IMR-90 (cell line): ENCODE measurements at regions of chr19 and their contacts with region 1.

Region 1: DNA sequence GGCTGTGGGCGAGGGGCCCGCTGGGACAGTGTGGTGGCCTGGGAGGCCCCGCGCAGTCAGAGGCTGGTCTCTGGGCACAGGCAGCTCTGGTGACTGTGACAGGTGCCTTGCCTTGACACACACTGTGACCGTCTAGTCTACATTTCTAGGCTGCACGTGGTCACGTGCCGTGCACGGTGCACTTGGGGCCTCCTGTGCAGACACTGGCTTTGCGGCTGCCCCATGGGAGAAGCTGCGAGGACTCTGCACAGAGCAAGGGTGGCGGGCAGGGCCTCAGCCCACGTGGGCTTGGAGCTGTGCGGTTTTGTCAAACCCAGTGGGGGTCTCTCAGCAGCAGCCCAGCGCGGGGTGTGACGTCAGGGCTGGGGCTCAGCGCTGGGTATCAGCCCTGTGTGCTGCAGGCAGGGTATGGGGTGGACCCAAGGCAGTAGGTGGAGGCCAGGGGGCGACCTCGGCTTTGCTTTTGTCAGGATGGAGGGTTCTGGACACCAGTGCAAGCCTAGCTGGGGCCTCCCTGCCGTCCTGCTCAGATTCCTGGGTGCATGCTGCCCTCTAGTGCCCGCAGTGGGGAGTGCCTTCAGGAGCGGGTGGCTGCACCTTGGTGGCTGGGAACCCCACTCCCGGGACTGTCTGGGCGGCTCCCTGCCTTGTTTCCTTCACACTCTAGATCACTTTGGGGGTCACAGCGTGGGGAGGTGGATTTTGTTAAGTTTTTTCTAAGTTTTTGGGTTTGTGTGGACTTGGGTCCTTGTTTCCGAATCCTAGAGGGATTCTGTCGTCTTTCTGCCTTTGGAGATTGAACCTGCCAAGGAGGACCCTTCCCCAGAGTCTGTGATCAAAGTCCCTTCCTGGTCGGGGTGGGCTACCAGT is 62.6 kb downstream of the KDM4B start:
- DNase-seq: peak; percentile 65
- ATAC-seq: peak; percentile 96
- H3K4me3 ChIP-seq: no peak overlapping the region
- H3K27ac ChIP-seq: no peak overlapping the region
- H3K4me1 ChIP-seq: peaks cover 12% of the 10 kb centered on the region
- H3K27me3 ChIP-seq: no peaks in the 10 kb centered on the region
- CTCF ChIP-seq: peak; percentile 95
- POLR2A ChIP-seq: 0 out of 2 replicates have a peak, but pooled peaks have one; percentile 41
- RAD21 ChIP-seq: peak; percentile 96

Region 2: DNA sequence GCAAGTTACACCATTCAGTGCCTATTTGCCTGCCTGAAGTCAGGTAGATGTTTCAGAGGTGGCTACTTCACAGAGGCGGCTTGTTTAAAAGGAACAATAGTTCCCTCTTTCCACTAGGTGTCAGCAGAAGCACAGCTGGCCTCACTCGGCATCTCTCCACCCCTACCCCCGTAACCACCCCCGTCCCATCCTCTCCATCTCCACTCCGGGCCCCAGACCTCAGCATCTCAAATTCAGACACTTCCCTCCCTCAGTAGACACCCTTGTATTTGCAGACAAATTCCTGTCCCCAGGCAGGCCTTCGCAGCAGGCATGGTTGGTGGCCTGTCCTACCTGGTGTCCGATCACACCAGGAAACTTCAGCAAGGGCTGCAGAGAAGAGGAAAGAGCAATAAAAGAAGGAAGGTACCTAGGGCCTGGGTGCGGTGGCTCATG is 298.8 kb before region 1 on chr19:
- CTCF ChIA-PET with region 1: no interaction called
- POLR2A ChIA-PET with region 1: no interaction called
- dilution Hi-C with region 1: no loop called
- in situ Hi-C with region 1: no loop called
- intact Hi-C with region 1: loop called (anchors 10 kb)
- DNase-seq: peak; percentile 57
- ATAC-seq: peak; percentile 98
- H3K4me3 ChIP-seq: no peak overlapping the region
- H3K27ac ChIP-seq: no peak overlapping the region
- H3K4me1 ChIP-seq: peaks cover 2% of the 10 kb centered on the region; the same call in 1 of the 2 replicates
- H3K27me3 ChIP-seq: peaks cover 11% of the 10 kb centered on the region
- CTCF ChIP-seq: peak; percentile 95
- POLR2A ChIP-seq: 0 out of 2 replicates have a peak, but pooled peaks have one; percentile 34
- RAD21 ChIP-seq: peak; percentile 93

Region 3: GRCh38 chr19:4811328-4812131 is 219.9 kb before region 1 on chr19:
- CTCF ChIA-PET with region 1: interaction called, 8 read pairs
- POLR2A ChIA-PET with region 1: no interaction called
- dilution Hi-C with region 1: no loop called
- in situ Hi-C with region 1: loop called (anchors 5 kb)
- intact Hi-C with region 1: loop called (anchors 1 kb)
- DNase-seq: peak; percentile 45
- ATAC-seq: peak; percentile 33
- H3K4me3 ChIP-seq: no peak overlapping the region
- H3K27ac ChIP-seq: peak overlapping the region; percentile 11
- H3K4me1 ChIP-seq: peaks cover 2% of the 10 kb centered on the region; the same call in 1 of the 2 replicates
- H3K27me3 ChIP-seq: no peaks in the 10 kb centered on the region
- CTCF ChIP-seq: peak; percentile 71
- POLR2A ChIP-seq: no peak
- RAD21 ChIP-seq: peak; percentile 53

Region 4: DNA sequence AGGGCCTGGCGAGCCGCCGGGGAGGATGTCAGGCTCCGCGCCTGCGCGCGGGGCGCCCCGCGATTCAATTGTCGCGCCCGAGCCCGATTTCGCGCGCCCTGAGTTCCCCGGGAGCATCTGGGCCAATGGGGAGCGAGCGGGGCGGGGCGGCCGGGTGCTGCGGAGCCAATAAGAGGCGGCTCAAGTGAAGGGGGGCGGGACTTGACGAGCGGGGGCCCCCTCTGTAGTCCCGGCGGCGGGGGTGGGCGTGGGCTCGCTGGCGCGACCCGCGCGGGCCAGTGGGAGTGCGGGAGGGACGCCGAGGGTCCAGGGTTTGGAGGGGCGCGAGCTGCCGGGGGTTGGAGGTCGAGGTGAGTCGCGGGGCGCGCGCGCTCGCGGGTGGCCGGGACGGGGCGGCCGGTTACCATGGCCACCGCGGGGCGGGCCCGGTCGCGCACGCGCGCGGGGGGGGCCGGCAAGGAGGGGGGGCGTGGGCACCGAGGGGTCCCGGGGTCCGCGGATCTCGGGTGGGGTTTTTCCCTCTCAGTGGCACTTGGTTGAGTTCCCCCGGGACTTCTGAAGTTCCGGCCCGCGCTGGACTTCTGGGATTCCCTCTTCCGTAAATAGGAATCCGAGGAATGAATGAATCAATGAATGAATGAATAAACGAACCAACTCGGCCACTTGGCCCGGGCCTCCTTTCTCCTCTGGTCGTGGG is 121.4 kb before region 1 on chr19:
- CTCF ChIA-PET with region 1: interaction called, 3 read pairs
- POLR2A ChIA-PET with region 1: no interaction called
- dilution Hi-C with region 1: no loop called
- in situ Hi-C with region 1: no loop called
- intact Hi-C with region 1: loop called (anchors 2 kb)
- DNase-seq: peak; percentile 79
- ATAC-seq: peak; percentile 79
- H3K4me3 ChIP-seq: peak overlapping the region; percentile 87
- H3K27ac ChIP-seq: peak overlapping the region; percentile 91
- H3K4me1 ChIP-seq: peaks cover 28% of the 10 kb centered on the region
- H3K27me3 ChIP-seq: no peaks in the 10 kb centered on the region
- CTCF ChIP-seq: no peak
- POLR2A ChIP-seq: no peak
- RAD21 ChIP-seq: no peak

Region 5: GRCh38 chr19:5001615-5002014 is 29.9 kb before region 1 on chr19:
- CTCF ChIA-PET with region 1: interaction called, 11 read pairs
- POLR2A ChIA-PET with region 1: no interaction called
- dilution Hi-C with region 1: no loop called
- in situ Hi-C with region 1: no loop called
- intact Hi-C with region 1: no loop called
- DNase-seq: peak; percentile 71
- ATAC-seq: peak; percentile 69
- H3K4me3 ChIP-seq: no peak overlapping the region
- H3K27ac ChIP-seq: no peak overlapping the region
- H3K4me1 ChIP-seq: no peaks in the 10 kb centered on the region
- H3K27me3 ChIP-seq: no peaks in the 10 kb centered on the region
- CTCF ChIP-seq: peak; percentile 62
- POLR2A ChIP-seq: no peak
- RAD21 ChIP-seq: peak; percentile 48